Mammary epithelial cell (primary cell): ENCODE measurements at regions of chr12 and their contacts with region 1.

Region 1: DNA sequence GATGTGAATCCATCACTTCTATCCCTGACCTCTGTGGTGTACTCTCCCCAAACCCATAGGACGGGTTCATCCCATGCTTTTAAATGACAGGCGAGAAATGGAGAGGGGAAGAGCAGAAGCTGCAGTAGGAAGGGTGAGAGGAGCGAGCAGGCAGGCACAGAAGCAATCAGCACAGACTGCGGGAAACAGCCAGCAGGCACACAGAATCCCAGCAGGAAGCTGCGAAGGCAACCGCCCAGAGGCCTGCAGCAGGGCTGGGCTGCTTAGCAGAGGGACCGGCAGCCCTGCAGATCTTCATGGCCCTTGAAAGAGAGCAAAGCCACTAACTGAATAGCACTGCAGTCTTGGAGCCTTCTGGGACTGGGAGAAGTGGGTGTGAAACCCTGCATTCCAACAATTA is 287.0 kb upstream of the FKBP4 start:
- DNase-seq: no peak
- H3K4me3 ChIP-seq: no peak overlapping the region
- H3K27ac ChIP-seq: no peak overlapping the region
- H3K4me1 ChIP-seq: no peaks in the 10 kb centered on the region
- H3K27me3 ChIP-seq: peaks cover 2% of the 10 kb centered on the region
- CTCF ChIP-seq: no peak

Region 2: GRCh38 chr12:2456813-2457186 is 51.0 kb before region 1 on chr12:
- CTCF ChIA-PET with region 1: no interaction called
- dilution Hi-C with region 1: loop called (anchors 5 kb)
- in situ Hi-C with region 1: no loop called
- intact Hi-C with region 1: no loop called
- DNase-seq: no peak
- H3K4me3 ChIP-seq: no peak overlapping the region
- H3K27ac ChIP-seq: no peak overlapping the region
- H3K4me1 ChIP-seq: no peaks in the 10 kb centered on the region
- H3K27me3 ChIP-seq: peaks cover 5% of the 10 kb centered on the region
- CTCF ChIP-seq: no peak

Region 3: DNA sequence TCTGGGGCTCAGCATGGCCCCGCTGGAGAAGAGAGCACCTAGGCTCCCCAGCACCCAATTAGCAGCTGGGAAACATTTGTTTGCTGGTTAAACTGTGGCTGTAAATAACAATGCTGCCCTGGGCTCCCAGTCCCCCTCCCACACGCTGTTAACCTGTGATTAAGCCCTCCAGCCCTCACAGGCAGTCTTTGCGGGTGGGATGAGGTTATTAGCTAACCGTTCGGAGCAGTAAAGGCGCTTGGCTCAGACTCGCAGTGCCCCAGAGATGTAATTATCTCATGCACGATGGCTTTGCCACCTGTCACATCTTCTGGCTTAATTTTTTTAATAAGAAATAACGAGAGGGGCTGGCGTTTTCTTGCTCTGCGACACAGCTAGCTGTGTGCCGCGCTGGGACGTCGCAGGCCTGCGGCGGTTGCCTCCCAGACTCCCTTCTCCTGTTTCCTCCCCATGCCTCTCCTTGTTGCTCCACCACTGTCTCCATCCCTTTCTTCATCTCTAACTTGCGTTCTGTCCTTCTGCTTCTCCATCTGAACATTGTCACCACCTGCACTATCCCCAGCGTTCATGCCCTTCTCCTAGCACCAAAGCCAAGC is 47.8 kb after region 1 on chr12:
- CTCF ChIA-PET with region 1: no interaction called
- dilution Hi-C with region 1: loop called (anchors 5 kb)
- in situ Hi-C with region 1: no loop called
- intact Hi-C with region 1: no loop called
- DNase-seq: no peak
- H3K4me3 ChIP-seq: no peak overlapping the region
- H3K27ac ChIP-seq: no peak overlapping the region
- H3K4me1 ChIP-seq: no peaks in the 10 kb centered on the region
- H3K27me3 ChIP-seq: no peaks in the 10 kb centered on the region
- CTCF ChIP-seq: no peak

Region 4: DNA sequence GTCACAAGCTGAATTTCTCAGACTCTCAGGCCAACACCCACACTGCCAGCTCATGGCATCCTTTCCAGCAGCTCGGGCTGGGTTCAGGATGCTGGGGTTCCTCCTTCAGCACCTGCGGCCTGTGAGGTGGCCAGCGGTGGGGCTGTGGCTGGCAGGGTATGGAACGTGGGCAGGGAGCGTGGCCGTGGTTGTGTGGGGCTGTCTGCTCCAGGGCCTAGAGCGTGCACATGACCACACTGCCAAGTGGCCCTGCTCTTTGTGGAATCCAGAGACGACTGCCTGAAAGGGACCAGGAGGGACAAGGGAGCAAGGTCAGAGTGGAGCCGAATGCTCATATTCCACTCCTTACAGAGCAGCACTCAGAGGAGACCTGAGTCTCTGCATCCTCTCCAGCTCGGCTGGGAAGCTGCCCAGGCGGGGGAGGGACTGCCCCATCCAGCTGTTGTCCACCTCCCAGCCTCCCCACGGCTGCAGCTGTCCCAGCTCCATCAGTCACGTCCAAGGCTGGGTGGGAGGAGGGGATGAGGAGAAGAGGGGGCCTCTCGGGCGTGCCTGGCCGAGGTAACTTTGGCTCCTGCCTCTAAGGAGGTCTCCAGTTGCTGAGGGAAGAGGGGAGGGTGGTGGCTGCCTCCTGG is 640.7 kb after region 1 on chr12:
- CTCF ChIA-PET with region 1: no interaction called
- dilution Hi-C with region 1: no loop called
- in situ Hi-C with region 1: no loop called
- intact Hi-C with region 1: no loop called
- DNase-seq: no peak
- H3K4me3 ChIP-seq: no peak overlapping the region
- H3K27ac ChIP-seq: no peak overlapping the region
- H3K4me1 ChIP-seq: no peaks in the 10 kb centered on the region
- H3K27me3 ChIP-seq: no peaks in the 10 kb centered on the region
- CTCF ChIP-seq: no peak